ENCODE measurements at regions of chr3 and their contacts with region 1.

Region 1: GRCh38 chr3:108292905-108293328 is 3.4 kb upstream of the HHLA2 start:
- DNase-seq: peak; percentile 74
- H3K4me3 Mint-ChIP-seq: peak overlapping the region; percentile 58
- H3K27ac Mint-ChIP-seq: peak overlapping the region; percentile 85
- H3K4me1 Mint-ChIP-seq: peaks cover 60% of the 10 kb centered on the region
- H3K27me3 Mint-ChIP-seq: no peaks in the 10 kb centered on the region

Region 2: DNA sequence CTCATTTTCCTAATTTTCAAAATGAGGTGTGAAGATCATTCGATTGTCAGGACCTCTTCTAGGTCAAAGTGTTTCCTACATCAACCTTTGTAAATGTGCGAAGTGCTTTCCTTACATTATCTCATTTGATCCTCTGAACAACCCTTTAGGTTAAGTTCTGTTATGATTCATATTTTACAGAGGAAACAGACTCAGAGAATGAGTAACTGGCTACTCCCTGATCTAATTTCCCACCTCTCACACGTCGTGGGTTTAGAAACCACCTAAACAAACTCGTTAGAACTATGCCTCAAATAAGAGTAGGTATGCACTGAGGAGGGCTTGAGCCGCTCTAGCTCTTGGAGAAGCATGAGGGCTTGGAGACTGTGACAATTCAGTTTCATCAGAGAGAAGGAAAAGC is 350.7 kb before region 1 on chr3:
- intact Hi-C with region 1: loop called (anchors 5 kb)
- DNase-seq: peak; percentile 75
- H3K4me3 Mint-ChIP-seq: peak overlapping the region; percentile 43
- H3K27ac Mint-ChIP-seq: peak overlapping the region; percentile 73
- H3K4me1 Mint-ChIP-seq: peaks cover 22% of the 10 kb centered on the region
- H3K27me3 Mint-ChIP-seq: peaks cover 5% of the 10 kb centered on the region

Region 3: DNA sequence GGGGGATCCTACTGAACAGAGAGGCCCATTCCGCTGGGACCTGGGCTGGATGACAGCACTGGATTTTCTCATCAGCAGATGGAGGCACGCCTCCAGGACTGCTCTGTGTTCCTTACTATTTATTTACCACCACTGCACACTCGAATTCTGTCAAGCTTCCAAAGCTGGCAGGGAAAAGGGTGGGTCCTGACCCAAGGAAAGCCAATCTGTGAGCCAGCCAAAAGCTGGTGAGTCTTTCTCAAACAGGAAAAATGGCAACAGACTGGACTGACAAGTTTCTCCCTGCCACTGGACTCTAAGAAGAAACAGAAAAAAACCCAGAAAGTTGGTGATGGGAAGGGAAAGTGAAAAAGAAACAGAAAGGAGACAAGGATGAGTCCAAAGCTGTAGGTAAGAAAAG is 239.8 kb before region 1 on chr3:
- intact Hi-C with region 1: no loop called
- DNase-seq: peak; percentile 49
- H3K4me3 Mint-ChIP-seq: no peak overlapping the region
- H3K27ac Mint-ChIP-seq: no peak overlapping the region
- H3K4me1 Mint-ChIP-seq: peaks cover 29% of the 10 kb centered on the region
- H3K27me3 Mint-ChIP-seq: no peaks in the 10 kb centered on the region

Region 4: DNA sequence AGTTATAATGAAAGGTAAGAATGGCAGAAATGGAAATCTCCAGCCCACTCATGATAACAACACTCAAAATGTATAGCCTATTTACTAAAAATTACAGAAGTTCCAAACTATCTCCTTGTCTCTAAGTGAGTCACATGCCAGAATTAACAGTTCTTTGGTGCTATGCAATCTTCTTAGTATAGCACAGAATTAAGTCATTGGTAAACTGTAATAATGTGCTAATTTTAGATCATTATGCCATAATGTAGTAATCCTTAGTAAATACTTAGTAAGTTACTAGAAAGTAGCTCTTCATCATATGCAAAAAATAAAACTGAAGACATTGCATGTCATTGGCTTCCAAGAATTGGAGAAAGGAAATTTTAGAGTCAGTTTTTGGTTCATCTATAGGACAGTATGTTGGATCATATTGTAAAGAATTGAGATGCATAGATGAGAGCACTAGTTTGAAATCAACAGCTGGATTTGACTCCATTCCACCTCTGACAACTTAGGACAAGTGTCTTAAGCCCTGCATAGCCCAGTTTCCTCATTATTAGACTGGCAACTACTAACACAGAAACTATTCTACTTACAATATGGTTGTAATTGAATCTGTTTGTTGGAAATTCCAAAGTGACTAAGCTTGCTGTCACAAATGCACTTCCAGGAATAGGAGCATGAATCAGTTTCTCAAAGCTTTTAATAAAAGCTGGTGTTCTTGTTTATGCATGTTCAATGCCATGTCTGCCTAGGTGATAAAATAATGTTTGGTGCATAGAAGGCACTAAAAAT is 162.0 kb before region 1 on chr3:
- intact Hi-C with region 1: loop called (anchors 1 kb)
- DNase-seq: no peak
- H3K4me3 Mint-ChIP-seq: peak overlapping the region; percentile 57
- H3K27ac Mint-ChIP-seq: peak overlapping the region; percentile 78
- H3K4me1 Mint-ChIP-seq: peaks cover 81% of the 10 kb centered on the region
- H3K27me3 Mint-ChIP-seq: no peaks in the 10 kb centered on the region

Region 5: DNA sequence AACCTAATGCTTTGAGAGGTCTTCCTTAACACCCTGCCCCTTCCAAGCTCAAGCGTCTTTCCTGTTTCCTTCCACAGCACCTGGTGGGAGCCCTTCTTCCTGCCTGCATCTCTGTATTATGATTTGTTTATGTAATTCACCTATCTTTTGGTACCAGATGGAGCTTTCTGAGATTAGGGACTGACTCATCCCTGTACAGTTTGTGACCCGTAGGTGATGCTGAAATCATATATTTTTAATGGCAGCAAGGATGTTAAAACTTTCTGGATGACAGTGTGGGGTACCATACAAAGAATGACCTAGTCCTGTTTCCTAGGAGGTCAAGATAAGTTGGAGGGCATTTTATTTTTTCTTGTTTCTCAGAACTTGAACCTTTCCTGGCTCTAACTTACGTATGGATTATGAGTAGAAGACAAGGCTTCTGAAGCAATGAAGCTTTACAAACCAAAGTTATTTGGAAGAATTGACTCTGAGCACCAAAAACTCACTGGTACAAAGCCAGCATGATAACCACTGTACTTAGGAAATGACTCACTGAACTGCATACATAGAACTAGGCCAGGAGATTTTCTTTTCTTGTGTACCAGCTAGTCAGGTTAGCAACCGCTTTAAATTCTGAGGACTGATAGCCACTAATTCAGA is 50.0 kb after region 1 on chr3:
- intact Hi-C with region 1: loop called (anchors 1 kb)
- DNase-seq: peak; percentile 58
- H3K4me3 Mint-ChIP-seq: peak overlapping the region; percentile 15
- H3K27ac Mint-ChIP-seq: peak overlapping the region; percentile 79
- H3K4me1 Mint-ChIP-seq: peaks cover 23% of the 10 kb centered on the region
- H3K27me3 Mint-ChIP-seq: peaks cover 7% of the 10 kb centered on the region

Region 6: DNA sequence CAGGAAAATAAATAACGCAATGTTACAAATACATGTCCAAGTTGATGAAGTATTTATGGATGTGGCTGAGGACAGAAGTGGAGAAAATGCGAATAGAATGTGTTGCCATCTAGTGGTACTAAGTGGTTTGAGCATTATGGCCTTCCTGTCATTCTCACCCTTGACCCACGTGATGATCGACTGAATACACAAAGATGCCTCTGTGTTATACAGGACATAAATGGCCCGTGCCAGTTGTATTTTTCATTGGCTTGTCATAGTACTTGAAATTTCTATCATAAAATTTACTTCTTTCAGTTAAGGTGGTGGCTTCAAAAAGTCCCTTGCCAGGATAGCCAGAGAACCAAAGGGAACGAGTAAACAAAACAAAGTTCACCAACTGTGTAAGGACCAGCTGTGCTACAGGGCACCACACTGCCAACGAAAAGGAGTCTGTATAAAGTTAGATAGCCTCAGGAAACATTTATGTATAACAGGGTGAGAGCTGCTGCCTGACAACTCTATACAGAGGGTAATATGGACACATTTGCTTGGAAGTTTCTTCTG is 113.8 kb after region 1 on chr3:
- intact Hi-C with region 1: loop called (anchors 5 kb)
- DNase-seq: peak; percentile 73
- H3K4me3 Mint-ChIP-seq: no peak overlapping the region
- H3K27ac Mint-ChIP-seq: no peak overlapping the region
- H3K4me1 Mint-ChIP-seq: no peaks in the 10 kb centered on the region
- H3K27me3 Mint-ChIP-seq: peaks cover 3% of the 10 kb centered on the region

Region 7: DNA sequence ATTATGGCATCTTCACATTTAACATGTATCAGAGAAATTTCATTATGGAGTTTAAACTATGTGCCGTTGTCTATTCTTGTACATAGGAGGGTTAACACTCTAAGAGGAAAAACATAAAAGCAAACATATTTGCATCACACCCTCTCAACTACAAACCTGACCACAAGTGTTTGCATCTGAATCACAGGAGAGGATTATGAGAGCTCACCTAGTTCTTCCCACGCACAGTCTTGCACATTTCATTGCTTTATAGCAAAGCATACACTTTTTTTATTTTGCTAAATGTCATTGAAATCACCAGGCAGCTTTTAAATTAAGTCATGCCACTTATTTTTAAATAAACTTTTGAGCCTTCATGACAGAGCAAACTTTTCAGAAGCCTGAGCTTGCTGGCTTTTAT is 542.2 kb after region 1 on chr3:
- intact Hi-C with region 1: loop called (anchors 5 kb)
- DNase-seq: peak; percentile 86
- H3K4me3 Mint-ChIP-seq: peak overlapping the region; percentile 90
- H3K27ac Mint-ChIP-seq: peak overlapping the region; percentile 98
- H3K4me1 Mint-ChIP-seq: peaks cover 70% of the 10 kb centered on the region
- H3K27me3 Mint-ChIP-seq: no peaks in the 10 kb centered on the region

Measured in activated CD4-positive, alpha-beta T cell treated with anti-CD3 and anti-CD28 coated beads, Interleukin-2, amount 10 ng/mL, durations not matched to agents 24 days and 14 days (primary cell).